ENCODE measurements at regions of chr1 and their contacts with region 1.

Region 1: GRCh38 chr1:108691942-108692723 is at the start of gene PRPF38B:
- DNase-seq: peak; percentile 93
- H3K4me3 Mint-ChIP-seq: peak within 1 kb of the TSS; percentile 98
- H3K27ac Mint-ChIP-seq: peak within 1 kb of the TSS; percentile 99
- H3K4me1 Mint-ChIP-seq: peaks cover 30% of the 10 kb centered on the region
- H3K27me3 Mint-ChIP-seq: peaks cover 5% of the 10 kb centered on the region
- total RNA-seq, gene PRPF38B: 86.7 and 88.5 TPM in 2 replicates

Region 2: GRCh38 chr1:108504447-108504846 is 187.7 kb before region 1 on chr1:
- intact Hi-C with region 1: loop called (anchors 1 kb)
- DNase-seq: no peak
- H3K4me3 Mint-ChIP-seq: no peak overlapping the region
- H3K27ac Mint-ChIP-seq: no peak overlapping the region
- H3K4me1 Mint-ChIP-seq: peaks cover 2% of the 10 kb centered on the region
- H3K27me3 Mint-ChIP-seq: peaks cover 38% of the 10 kb centered on the region

Region 3: GRCh38 chr1:108643492-108644335 is 48.4 kb before region 1 on chr1:
- intact Hi-C with region 1: loop called (anchors 1 kb)
- DNase-seq: peak; percentile 40
- H3K4me3 Mint-ChIP-seq: no peak overlapping the region
- H3K27ac Mint-ChIP-seq: peak overlapping the region; percentile 97
- H3K4me1 Mint-ChIP-seq: peaks cover 69% of the 10 kb centered on the region
- H3K27me3 Mint-ChIP-seq: no peaks in the 10 kb centered on the region

Region 4: GRCh38 chr1:108703939-108704900 is 12.1 kb after region 1 on chr1:
- intact Hi-C with region 1: loop called (anchors 1 kb)
- DNase-seq: no peak
- H3K4me3 Mint-ChIP-seq: no peak overlapping the region
- H3K27ac Mint-ChIP-seq: peak overlapping the region; percentile 87
- H3K4me1 Mint-ChIP-seq: peaks cover 35% of the 10 kb centered on the region
- H3K27me3 Mint-ChIP-seq: no peaks in the 10 kb centered on the region

Region 5: GRCh38 chr1:108877348-108878159 is 185.4 kb after region 1 on chr1:
- intact Hi-C with region 1: loop called (anchors 10 kb)
- DNase-seq: no peak
- H3K4me3 Mint-ChIP-seq: peak overlapping the region; percentile 89
- H3K27ac Mint-ChIP-seq: peak overlapping the region; percentile 66
- H3K4me1 Mint-ChIP-seq: peaks cover 23% of the 10 kb centered on the region
- H3K27me3 Mint-ChIP-seq: peaks cover 10% of the 10 kb centered on the region

Region 6: GRCh38 chr1:108963052-108963686 is 271.0 kb after region 1 on chr1 and contains the start of gene CLCC1:
- intact Hi-C with region 1: loop called (anchors 5 kb)
- DNase-seq: peak; percentile 93
- H3K4me3 Mint-ChIP-seq: peak within 1 kb of the TSS; percentile 89
- H3K27ac Mint-ChIP-seq: peak within 1 kb of the TSS; percentile 94
- H3K4me1 Mint-ChIP-seq: peaks cover 17% of the 10 kb centered on the region
- H3K27me3 Mint-ChIP-seq: no peaks in the 10 kb centered on the region
- total RNA-seq, gene CLCC1: 21.8 and 26.7 TPM in 2 replicates

Measured in activated T-helper 2 cell treated with anti-CD3 and anti-CD28 coated beads, Interferon-gamma antibody, Interleukin-2, Interleukin-4, amounts not matched to agents 10 μg/mL and 5 μg/mL and 100 μg/mL, durations not matched to agents 14 hours and 24 hours and 36 hours (primary cell).